Heart left ventricle (tissue), 16 donors: ENCODE measurements at regions of chr3 and their contacts with region 1.

Region 1: GRCh38 chr3:43031485-43031884 is 52.4 kb downstream of the GASK1A start:
- DNase-seq: peak in 2 of 5 donors; percentile 14 to 73
- ATAC-seq: peak; percentile 32 to 61 (median 44)
- H3K4me3 ChIP-seq: no peak overlapping the region
- H3K27ac ChIP-seq: peak overlapping the region in 1 of 12 donors; percentile 55
- H3K4me1 ChIP-seq: peaks cover 0 to 10% (median 0%) of the 10 kb centered on the region in 12 donors
- H3K27me3 ChIP-seq: no peaks in the 10 kb centered on the region
- CTCF ChIP-seq: no peak
- POLR2A ChIP-seq: no peak

Region 2: GRCh38 chr3:42923611-42924010 is 107.9 kb before region 1 on chr3:
- intact Hi-C with region 1: no loop called
- DNase-seq: no peak
- ATAC-seq: no peak
- H3K4me3 ChIP-seq: no peak overlapping the region
- H3K27ac ChIP-seq: no peak overlapping the region
- H3K4me1 ChIP-seq: no peaks in the 10 kb centered on the region
- H3K27me3 ChIP-seq: no peaks in the 10 kb centered on the region
- CTCF ChIP-seq: no peak
- POLR2A ChIP-seq: no peak

Region 3: DNA sequence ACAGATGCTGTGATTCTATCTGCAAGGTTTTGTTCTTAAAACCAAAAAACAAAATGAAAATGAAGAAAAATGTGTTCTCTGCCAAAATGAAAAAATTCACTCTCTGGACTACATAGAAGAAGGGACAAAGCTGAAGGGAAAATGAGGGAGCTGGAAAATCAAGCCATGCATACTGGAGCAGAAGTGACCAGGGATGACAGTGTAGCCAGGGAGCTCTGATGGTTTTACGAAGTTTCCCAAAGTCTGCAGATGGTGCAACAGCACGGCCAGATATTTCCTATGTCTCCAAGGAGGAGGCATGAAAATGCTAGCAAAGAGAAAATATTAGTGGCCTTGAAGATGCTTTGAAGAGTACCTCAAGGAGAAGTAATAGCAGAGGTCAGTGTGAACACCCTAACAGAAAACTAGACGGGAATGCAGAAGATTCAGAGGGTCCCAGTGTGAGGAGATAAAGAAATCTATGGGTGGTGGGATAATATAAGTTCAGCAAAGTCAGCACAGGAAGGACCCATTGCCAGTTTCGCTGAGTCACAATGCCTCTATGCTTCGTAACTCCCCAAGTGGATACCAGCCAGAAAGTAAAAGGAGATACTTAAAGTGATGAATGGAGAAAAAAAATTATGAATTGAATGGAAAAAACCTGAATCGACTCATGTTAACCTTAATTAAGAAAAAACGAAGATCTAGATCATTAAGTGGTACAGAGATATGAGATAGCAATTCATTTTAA is 113.4 kb after region 1 on chr3:
- intact Hi-C with region 1: loop called in 1 of 10 experiments (anchors 5 kb)
- DNase-seq: no peak
- ATAC-seq: no peak
- H3K4me3 ChIP-seq: no peak overlapping the region
- H3K27ac ChIP-seq: no peak overlapping the region
- H3K4me1 ChIP-seq: no peaks in the 10 kb centered on the region
- H3K27me3 ChIP-seq: peaks cover 0 to 6% (median 0%) of the 10 kb centered on the region in 9 donors
- CTCF ChIP-seq: no peak
- POLR2A ChIP-seq: no peak